PC-3 (cell line): ENCODE measurements at regions of chr4 and their contacts with region 1.

Region 1: DNA sequence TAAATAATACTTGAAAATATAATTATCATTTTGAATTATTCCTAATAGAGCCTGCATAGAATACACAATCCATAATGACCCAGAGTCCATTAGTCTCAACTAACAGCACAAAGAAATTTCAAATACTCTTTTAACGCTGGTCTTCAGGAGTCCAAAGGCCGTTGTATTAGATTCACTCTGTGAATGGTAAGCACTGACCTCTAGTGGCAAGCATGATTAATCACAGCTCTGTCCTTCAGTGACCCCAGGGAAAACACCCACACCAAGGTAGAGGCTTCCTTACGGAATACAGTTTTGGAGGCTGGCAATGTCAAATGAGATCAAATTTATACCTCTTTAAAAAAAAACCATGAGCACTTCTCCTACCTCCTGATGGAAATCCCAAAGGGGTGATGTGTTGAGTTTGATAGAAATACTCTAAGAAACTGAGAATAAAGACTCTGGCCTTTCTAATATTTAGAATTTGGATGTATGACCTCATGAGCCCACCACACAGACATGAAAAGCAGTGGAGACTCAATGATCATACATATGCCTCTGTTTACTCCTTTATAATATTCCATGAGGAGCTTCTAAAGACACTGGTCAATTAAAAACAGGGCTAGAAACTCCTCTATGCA is 147.2 kb upstream of the DKK2 start:
- DNase-seq: peak; percentile 61
- ATAC-seq: peak; percentile 76
- H3K4me3 ChIP-seq: no peak overlapping the region
- H3K27ac ChIP-seq: no peak overlapping the region
- H3K4me1 ChIP-seq: no peaks in the 10 kb centered on the region
- H3K27me3 ChIP-seq: peaks cover 9% of the 10 kb centered on the region; the same call in 1 of the 2 replicates
- CTCF ChIP-seq: peak; percentile 73

Region 2: DNA sequence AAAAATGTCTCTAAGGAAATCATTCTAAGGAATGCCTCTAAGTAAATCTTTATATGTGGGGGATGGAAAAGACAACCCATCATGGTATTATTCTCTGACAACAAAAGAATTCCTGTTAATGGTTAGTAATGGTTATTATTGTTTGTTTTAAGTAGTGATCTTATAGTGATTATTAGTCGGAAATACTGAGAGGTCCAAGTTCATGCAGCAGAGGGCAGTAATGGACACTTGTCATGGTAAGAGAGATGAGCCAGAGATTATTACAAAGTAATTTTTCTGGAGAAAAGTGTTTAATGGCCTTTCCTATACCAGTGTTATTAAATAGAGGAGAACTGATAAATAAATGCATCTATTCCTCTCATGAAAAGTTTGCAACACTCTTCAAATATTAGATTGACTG is 139.1 kb before region 1 on chr4:
- CTCF ChIA-PET with region 1: no interaction called
- POLR2A ChIA-PET with region 1: no interaction called
- intact Hi-C with region 1: loop called (anchors 2 kb)
- DNase-seq: peak; percentile 28
- ATAC-seq: no peak
- H3K4me3 ChIP-seq: no peak overlapping the region
- H3K27ac ChIP-seq: no peak overlapping the region
- H3K4me1 ChIP-seq: no peaks in the 10 kb centered on the region
- H3K27me3 ChIP-seq: no peaks in the 10 kb centered on the region
- CTCF ChIP-seq: peak; percentile 37

Region 3: GRCh38 chr4:107736924-107737448 is 553.7 kb after region 1 on chr4:
- CTCF ChIA-PET with region 1: no interaction called
- POLR2A ChIA-PET with region 1: no interaction called
- intact Hi-C with region 1: loop called (anchors 5 kb)
- DNase-seq: peak; percentile 54
- ATAC-seq: peak; percentile 71
- H3K4me3 ChIP-seq: no peak overlapping the region
- H3K27ac ChIP-seq: no peak overlapping the region
- H3K4me1 ChIP-seq: no peaks in the 10 kb centered on the region
- H3K27me3 ChIP-seq: no peaks in the 10 kb centered on the region
- CTCF ChIP-seq: peak; percentile 83